ENCODE measurements at regions of chr2 and their contacts with region 1.

Region 1: DNA sequence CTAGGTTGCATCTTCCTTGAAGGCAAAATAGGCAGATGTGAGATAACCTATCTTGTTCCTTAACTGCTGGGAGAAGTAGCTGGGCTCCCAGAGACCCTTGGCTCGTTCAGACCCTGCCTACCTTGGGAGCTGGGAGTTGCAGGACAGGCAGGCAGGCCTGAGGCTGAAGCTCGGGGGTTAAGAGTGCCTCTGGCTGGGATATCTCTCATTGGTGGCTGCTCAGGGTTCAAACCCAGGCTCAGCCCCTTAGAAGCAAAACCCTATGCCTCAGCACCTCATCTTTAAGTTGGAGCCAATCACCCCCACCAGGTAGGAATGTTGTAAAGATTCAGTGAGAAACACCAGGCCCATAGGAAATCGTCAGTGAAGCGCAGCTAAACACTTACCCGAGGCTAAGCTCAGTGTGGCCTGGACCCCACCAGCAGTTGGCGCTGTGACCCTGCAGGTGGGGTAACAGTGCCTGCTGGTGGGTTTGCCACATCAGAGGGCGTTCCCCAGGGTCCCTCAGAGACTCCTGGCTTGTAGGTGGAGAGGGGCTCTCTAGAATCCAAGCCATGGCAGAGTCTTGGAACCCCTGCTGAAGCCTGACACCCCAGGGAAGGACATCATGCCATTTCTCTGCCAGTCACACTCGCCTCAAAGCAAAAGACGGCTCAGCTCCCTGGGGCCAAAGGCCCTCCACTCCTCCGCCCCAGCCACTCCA is 54.6 kb upstream of the GPR17 start:
- DNase-seq: peak; percentile 82
- ATAC-seq: peak; percentile 96
- H3K4me3 Mint-ChIP-seq: no peak overlapping the region
- H3K27ac Mint-ChIP-seq: peak overlapping the region; percentile 58
- H3K4me1 Mint-ChIP-seq: no peaks in the 10 kb centered on the region
- H3K27me3 Mint-ChIP-seq: no peaks in the 10 kb centered on the region

Region 2: GRCh38 chr2:127649684-127650040 is 58.3 kb after region 1 on chr2:
- POLR2A ChIA-PET with region 1: interaction called, 18 read pairs
- DNase-seq: peak; percentile 81
- ATAC-seq: peak; percentile 71
- H3K4me3 Mint-ChIP-seq: peak overlapping the region; percentile 25
- H3K27ac Mint-ChIP-seq: peak overlapping the region; percentile 68
- H3K4me1 Mint-ChIP-seq: peaks cover 10% of the 10 kb centered on the region
- H3K27me3 Mint-ChIP-seq: no peaks in the 10 kb centered on the region

Region 3: DNA sequence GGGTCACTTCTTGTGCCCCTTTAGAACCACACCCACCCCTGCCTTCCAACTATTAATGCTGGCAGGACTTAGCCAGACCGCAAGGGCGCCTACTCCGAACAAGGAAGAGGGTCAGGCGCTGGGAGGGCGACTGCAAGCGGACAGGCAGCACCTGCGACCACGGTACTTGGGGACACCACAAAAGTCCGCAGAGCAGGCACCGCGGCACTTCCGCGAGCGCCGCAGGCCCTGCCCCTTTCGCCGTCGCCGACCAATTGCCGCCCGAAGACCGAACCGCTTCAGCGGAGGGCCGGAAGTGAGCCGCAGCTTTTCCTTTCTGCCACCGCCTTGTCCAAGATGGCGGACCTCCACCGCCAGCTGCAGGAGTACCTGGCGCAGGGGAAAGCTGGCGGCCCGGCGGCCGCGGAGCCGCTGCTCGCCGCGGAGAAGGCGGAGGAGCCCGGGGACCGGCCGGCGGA is 109.8 kb after region 1 on chr2 and contains the start of gene SFT2D3:
- POLR2A ChIA-PET with region 1: interaction called, 10 read pairs
- DNase-seq: peak; percentile 90
- ATAC-seq: peak; percentile 78
- H3K4me3 Mint-ChIP-seq: peak within 1 kb of the TSS; percentile 90
- H3K27ac Mint-ChIP-seq: peak within 1 kb of the TSS; percentile 97
- H3K4me1 Mint-ChIP-seq: peaks cover 25% of the 10 kb centered on the region
- H3K27me3 Mint-ChIP-seq: no peaks in the 10 kb centered on the region
- total RNA-seq, gene SFT2D3: 7.5 to 8.7 TPM

Measured in activated naive CD8-positive, alpha-beta T cell treated with anti-CD3 and anti-CD28 coated beads, Interleukin-2, amount 10 ng/mL, durations not matched to agents 7 days and 5 days (primary cell).